GM12878 (cell line): ENCODE measurements at regions of chr10 and their contacts with region 1.

Region 1: GRCh38 chr10:48649349-48649944 is 35.2 kb upstream of the WDFY4 start:
- DNase-seq: no peak
- ATAC-seq: peak; percentile 36; the same call in 2 of the 3 replicates
- H3K4me3 ChIP-seq: no peak overlapping the region
- H3K27ac ChIP-seq: no peak overlapping the region
- H3K4me1 ChIP-seq: peaks cover 7% of the 10 kb centered on the region; the same call in 1 of the 2 replicates
- H3K27me3 ChIP-seq: no peaks in the 10 kb centered on the region
- CTCF ChIP-seq: peak; percentile 3 to 24 (median 23); a peak in 2 of 6 replicates
- EP300 ChIP-seq: no peak
- POLR2A ChIP-seq: no peak
- RAD21 ChIP-seq: no peak

Region 2: GRCh38 chr10:48634198-48634983 is 15.1 kb before region 1 on chr10:
- CTCF ChIA-PET with region 1: interaction called, 11 read pairs
- POLR2A ChIA-PET with region 1: no interaction called
- RAD21 ChIA-PET with region 1: interaction called, 48 read pairs
- SMC1A ChIA-PET with region 1: interaction called, 50 read pairs
- in situ Hi-C with region 1: no loop called
- intact Hi-C with region 1: no loop called
- DNase-seq: peak; percentile 91
- ATAC-seq: peak; percentile 97
- H3K4me3 ChIP-seq: no peak overlapping the region
- H3K27ac ChIP-seq: peak overlapping the region; percentile 45
- H3K4me1 ChIP-seq: peaks cover 38% of the 10 kb centered on the region
- H3K27me3 ChIP-seq: no peaks in the 10 kb centered on the region
- CTCF ChIP-seq: no peak
- EP300 ChIP-seq: peak; percentile 35 to 41; a peak in 1 of 4 replicates
- POLR2A ChIP-seq: no peak
- RAD21 ChIP-seq: no peak